Stomach (tissue), 19 donors: ENCODE measurements at regions of chr5 and their contacts with region 1.

Region 1: DNA sequence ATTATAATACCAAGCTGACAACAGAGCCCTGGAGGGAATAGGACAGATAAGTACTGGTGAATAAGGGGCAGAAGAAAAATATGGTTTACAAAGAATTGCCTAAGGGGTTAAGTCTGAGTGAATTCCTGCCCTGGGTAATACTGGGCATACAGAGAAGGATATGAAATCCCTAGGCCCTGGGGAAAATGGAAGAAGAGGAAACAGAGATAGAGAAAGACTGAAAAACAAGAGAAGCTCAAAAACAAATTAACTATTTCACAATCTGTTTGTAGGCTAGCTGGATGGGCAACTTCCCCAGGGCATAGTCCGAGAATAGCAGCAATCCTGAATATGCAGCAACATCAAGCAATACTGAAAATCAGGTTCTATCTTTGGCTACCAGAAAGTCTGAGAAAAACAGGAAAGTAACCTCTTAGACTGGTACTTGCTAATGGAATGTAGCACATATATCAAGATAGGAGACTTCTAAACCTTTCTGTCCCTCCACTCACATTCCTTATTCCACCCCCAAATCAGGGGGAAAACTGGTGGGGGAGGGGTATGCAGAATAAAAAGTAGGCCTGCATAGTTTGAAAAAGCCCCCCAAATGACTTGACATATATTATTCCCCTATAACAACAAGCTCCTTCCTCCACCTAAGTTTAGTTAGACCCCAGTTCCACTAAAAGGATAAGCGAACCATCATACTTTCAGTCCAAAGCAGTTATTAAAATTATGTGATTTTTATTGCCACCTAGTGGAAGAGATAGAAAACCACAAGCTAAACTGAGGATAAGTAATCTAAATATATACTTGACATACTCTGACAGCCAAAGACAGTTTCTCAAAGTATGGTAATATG is 20.6 kb downstream of the SLC38A9 start:
- DNase-seq: peak in 1 of 2 donors; percentile 69
- H3K4me3 ChIP-seq: peak overlapping the region in 1 of 4 donors; percentile 2
- H3K27ac ChIP-seq: peak overlapping the region in 2 of 5 donors; percentile 41 to 55
- H3K4me1 ChIP-seq: peaks cover 0 to 35% (median 16%) of the 10 kb centered on the region in 4 donors
- H3K27me3 ChIP-seq: no peaks in the 10 kb centered on the region
- CTCF ChIP-seq: peak in 5 of 7 experiments; percentile 51 to 64 (median 60)
- EP300 ChIP-seq: no peak
- POLR2A ChIP-seq: no peak

Region 2: GRCh38 chr5:54785729-54786591 is 905.5 kb before region 1 on chr5:
- intact Hi-C with region 1: no loop called
- DNase-seq: peak in 1 of 2 donors; percentile 64
- H3K4me3 ChIP-seq: no peak overlapping the region
- H3K27ac ChIP-seq: peak overlapping the region in 1 of 5 donors; percentile 43
- H3K4me1 ChIP-seq: peaks cover 0 to 14% (median 8%) of the 10 kb centered on the region in 4 donors
- H3K27me3 ChIP-seq: no peaks in the 10 kb centered on the region
- CTCF ChIP-seq: no peak
- EP300 ChIP-seq: no peak
- POLR2A ChIP-seq: no peak

Region 3: GRCh38 chr5:55344392-55344992 is 347.0 kb before region 1 on chr5:
- intact Hi-C with region 1: loop called (anchors 10 kb)
- DNase-seq: peak; percentile 66 to 82
- H3K4me3 ChIP-seq: no peak overlapping the region
- H3K27ac ChIP-seq: peak overlapping the region in 1 of 5 donors; percentile 13
- H3K4me1 ChIP-seq: peaks cover 0 to 23% (median 9%) of the 10 kb centered on the region in 4 donors
- H3K27me3 ChIP-seq: no peaks in the 10 kb centered on the region
- CTCF ChIP-seq: peak in 5 of 7 experiments; percentile 44 to 87 (median 83)
- EP300 ChIP-seq: no peak
- POLR2A ChIP-seq: no peak

Region 4: GRCh38 chr5:55407059-55407684 is 284.3 kb before region 1 on chr5:
- intact Hi-C with region 1: loop called (anchors 5 kb)
- DNase-seq: peak in 1 of 2 donors; percentile 78
- H3K4me3 ChIP-seq: no peak overlapping the region
- H3K27ac ChIP-seq: no peak overlapping the region
- H3K4me1 ChIP-seq: peaks cover 0 to 10% (median 0%) of the 10 kb centered on the region in 4 donors
- H3K27me3 ChIP-seq: no peaks in the 10 kb centered on the region
- CTCF ChIP-seq: peak in 5 of 7 experiments; percentile 15 to 62 (median 57)
- EP300 ChIP-seq: no peak
- POLR2A ChIP-seq: no peak